Left lung (tissue), 14 donors: ENCODE measurements at regions of chr5 and their contacts with region 1.

Region 1: GRCh38 chr5:122195784-122196394 is 66.5 kb downstream of the ZNF474 start:
- DNase-seq: peak in 2 of 4 donors; percentile 52 to 71
- ATAC-seq: peak; percentile 86
- H3K4me3 ChIP-seq: no peak overlapping the region
- H3K27ac ChIP-seq: no peak overlapping the region
- H3K4me1 ChIP-seq: no peaks in the 10 kb centered on the region
- H3K27me3 ChIP-seq: no peaks in the 10 kb centered on the region
- CTCF ChIP-seq: peak; percentile 46 to 49

Region 2: GRCh38 chr5:121945261-121945660 is 250.6 kb before region 1 on chr5:
- intact Hi-C with region 1: no loop called
- DNase-seq: no peak
- ATAC-seq: no peak
- H3K4me3 ChIP-seq: no peak overlapping the region
- H3K27ac ChIP-seq: no peak overlapping the region
- H3K4me1 ChIP-seq: no peaks in the 10 kb centered on the region
- H3K27me3 ChIP-seq: no peaks in the 10 kb centered on the region
- CTCF ChIP-seq: no peak

Region 3: DNA sequence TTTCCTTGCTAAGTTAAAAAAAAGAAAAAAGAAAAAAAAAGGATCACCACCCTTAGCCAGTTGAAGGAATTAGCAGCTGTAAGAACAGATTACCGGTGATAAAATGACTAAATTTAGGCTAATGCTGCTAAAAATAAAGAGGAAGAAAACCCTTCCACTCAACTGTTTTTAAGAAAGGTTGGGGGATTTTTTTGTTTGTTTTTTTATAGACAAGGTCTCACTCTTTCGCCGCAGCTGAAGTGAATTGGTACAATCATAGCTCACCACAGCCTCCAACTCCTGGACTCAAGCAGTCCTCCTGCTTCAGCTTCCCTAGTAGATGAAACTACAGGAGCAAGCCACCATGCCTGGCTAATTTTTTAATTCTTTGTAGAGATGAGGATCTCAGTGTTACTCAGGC is 217.8 kb after region 1 on chr5:
- intact Hi-C with region 1: loop called in 1 of 2 experiments (anchors 5 kb)
- DNase-seq: no peak
- ATAC-seq: no peak
- H3K4me3 ChIP-seq: no peak overlapping the region
- H3K27ac ChIP-seq: no peak overlapping the region
- H3K4me1 ChIP-seq: no peaks in the 10 kb centered on the region
- H3K27me3 ChIP-seq: no peaks in the 10 kb centered on the region
- CTCF ChIP-seq: no peak